ENCODE measurements at regions of chr17 and their contacts with region 1.

Region 1: DNA sequence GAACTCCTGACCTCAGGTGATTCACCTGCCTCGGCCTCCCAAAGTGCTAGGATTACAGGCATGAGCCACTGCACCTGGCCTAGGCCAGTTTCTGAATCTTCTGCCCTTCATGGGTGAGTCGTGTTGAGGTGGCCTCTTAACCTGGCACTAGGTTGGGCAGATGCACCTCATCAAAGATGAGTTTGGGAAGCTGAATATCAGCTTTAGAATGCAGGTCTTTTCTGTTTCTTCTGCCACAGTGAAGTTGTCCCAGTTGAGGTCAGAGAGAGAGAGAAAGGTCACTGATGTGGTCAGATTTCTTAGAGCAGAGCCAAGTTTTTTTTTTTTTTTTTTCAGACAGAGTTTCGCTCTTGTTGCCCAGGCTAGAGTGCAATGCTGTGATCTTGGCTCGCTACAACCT is 111.3 kb upstream of the WSCD1 start:
- DNase-seq: no peak
- ATAC-seq: no peak
- H3K4me3 ChIP-seq: no peak overlapping the region
- H3K27ac ChIP-seq: no peak overlapping the region
- H3K4me1 ChIP-seq: no peaks in the 10 kb centered on the region
- H3K27me3 ChIP-seq: no peaks in the 10 kb centered on the region
- CTCF ChIP-seq: no peak

Region 2: GRCh38 chr17:5472511-5472910 is 486.3 kb before region 1 on chr17:
- CTCF ChIA-PET with region 1: no interaction called
- POLR2A ChIA-PET with region 1: no interaction called
- in situ Hi-C with region 1: no loop called
- intact Hi-C with region 1: no loop called
- DNase-seq: no peak
- ATAC-seq: no peak
- H3K4me3 ChIP-seq: no peak overlapping the region
- H3K27ac ChIP-seq: no peak overlapping the region
- H3K4me1 ChIP-seq: peaks cover 4% of the 10 kb centered on the region
- H3K27me3 ChIP-seq: no peaks in the 10 kb centered on the region
- CTCF ChIP-seq: no peak

Region 3: GRCh38 chr17:5971969-5972368 is 13.1 kb after region 1 on chr17:
- CTCF ChIA-PET with region 1: interaction called, 12 read pairs
- POLR2A ChIA-PET with region 1: no interaction called
- in situ Hi-C with region 1: no loop called
- intact Hi-C with region 1: no loop called
- DNase-seq: no peak
- ATAC-seq: no peak
- H3K4me3 ChIP-seq: no peak overlapping the region
- H3K27ac ChIP-seq: no peak overlapping the region
- H3K4me1 ChIP-seq: no peaks in the 10 kb centered on the region
- H3K27me3 ChIP-seq: no peaks in the 10 kb centered on the region
- CTCF ChIP-seq: no peak

Measured in Panc1 (cell line).